Endothelial cell of umbilical vein (primary cell): ENCODE measurements at regions of chr17 and their contacts with region 1.

Region 1: DNA sequence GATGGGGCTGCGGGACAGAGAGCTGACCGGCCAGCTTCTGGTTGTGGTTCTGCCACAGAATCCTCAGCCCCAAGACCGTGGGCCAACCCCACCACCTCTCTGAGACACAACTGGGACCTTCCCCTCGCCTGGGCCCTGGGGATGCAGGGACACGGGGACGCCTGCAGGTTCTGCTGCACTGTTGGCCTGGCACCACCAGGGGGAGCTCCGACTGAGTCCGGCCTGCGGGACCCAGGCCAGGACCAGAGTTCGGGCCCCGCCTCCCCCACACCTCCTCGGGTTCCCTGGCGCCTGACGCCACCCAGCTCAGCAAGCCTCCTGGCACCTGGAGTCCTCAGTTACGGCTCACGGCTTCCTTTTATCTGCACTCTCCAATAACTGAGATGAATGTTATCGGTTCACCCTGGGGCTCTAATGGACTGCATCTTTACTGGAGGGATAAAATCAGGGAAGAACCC is 27.3 kb downstream of the TBC1D16 start:
- DNase-seq: peak; percentile 54
- H3K4me3 ChIP-seq: no peak overlapping the region
- H3K27ac ChIP-seq: no peak overlapping the region
- H3K4me1 ChIP-seq: no peaks in the 10 kb centered on the region
- H3K27me3 ChIP-seq: no peaks in the 10 kb centered on the region
- CTCF ChIP-seq: peak; percentile 97 to 99
- POLR2A ChIP-seq: no peak

Region 2: DNA sequence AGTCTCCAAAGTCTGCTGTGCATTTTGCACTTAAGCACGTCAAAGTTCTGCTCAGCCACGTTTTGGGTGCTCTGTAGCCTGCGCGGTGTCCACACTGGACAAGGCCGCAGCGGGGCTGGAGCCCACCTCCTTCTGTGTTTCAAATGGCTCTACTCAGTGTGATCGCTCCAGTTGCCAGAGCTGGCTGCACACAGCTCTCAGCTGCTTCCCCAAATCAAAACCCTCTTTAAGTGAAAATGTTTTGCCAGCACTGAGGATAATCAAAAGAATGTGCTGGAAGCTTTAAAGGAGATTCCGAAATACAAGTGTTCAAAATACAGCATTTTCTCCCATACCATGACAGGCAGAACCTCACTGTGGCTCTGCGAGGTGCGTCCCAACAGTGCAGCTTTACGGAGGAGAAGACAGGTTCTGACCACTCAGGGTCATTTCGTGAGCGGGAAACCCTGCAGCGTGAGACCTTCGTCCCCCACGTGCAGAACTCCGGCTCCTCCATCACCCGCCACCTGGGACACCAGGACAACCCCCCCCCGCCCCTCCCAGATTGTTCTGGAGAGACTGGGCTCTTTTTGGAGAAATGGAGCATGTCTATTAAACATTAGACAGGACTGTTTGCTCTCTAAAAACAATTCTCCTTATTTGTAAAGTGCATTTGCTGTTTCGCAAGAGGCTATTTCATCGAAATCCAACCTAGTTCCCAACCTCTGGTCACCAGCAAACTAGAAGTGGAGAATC is 10.7 kb after region 1 on chr17:
- CTCF ChIA-PET with region 1: interaction called, 21 read pairs
- POLR2A ChIA-PET with region 1: no interaction called
- dilution Hi-C with region 1: no loop called
- intact Hi-C with region 1: no loop called
- DNase-seq: no peak
- H3K4me3 ChIP-seq: no peak overlapping the region
- H3K27ac ChIP-seq: no peak overlapping the region
- H3K4me1 ChIP-seq: no peaks in the 10 kb centered on the region
- H3K27me3 ChIP-seq: no peaks in the 10 kb centered on the region
- CTCF ChIP-seq: no peak
- POLR2A ChIP-seq: no peak

Region 3: GRCh38 chr17:80035943-80036714 is 27.7 kb after region 1 on chr17 and contains the start of gene CCDC40:
- CTCF ChIA-PET with region 1: interaction called, 20 read pairs
- POLR2A ChIA-PET with region 1: no interaction called
- dilution Hi-C with region 1: no loop called
- intact Hi-C with region 1: loop called (anchors 1 kb)
- DNase-seq: peak; percentile 72
- H3K4me3 ChIP-seq: peak within 1 kb of the TSS; percentile 5 to 86 (median 76)
- H3K27ac ChIP-seq: peak within 1 kb of the TSS; percentile 71
- H3K4me1 ChIP-seq: peaks cover 7% of the 10 kb centered on the region
- H3K27me3 ChIP-seq: no peaks in the 10 kb centered on the region
- CTCF ChIP-seq: no peak
- POLR2A ChIP-seq: peak; percentile 63
- total RNA-seq, gene CCDC40: 4.1 and 5.5 TPM in 2 replicates

Region 4: DNA sequence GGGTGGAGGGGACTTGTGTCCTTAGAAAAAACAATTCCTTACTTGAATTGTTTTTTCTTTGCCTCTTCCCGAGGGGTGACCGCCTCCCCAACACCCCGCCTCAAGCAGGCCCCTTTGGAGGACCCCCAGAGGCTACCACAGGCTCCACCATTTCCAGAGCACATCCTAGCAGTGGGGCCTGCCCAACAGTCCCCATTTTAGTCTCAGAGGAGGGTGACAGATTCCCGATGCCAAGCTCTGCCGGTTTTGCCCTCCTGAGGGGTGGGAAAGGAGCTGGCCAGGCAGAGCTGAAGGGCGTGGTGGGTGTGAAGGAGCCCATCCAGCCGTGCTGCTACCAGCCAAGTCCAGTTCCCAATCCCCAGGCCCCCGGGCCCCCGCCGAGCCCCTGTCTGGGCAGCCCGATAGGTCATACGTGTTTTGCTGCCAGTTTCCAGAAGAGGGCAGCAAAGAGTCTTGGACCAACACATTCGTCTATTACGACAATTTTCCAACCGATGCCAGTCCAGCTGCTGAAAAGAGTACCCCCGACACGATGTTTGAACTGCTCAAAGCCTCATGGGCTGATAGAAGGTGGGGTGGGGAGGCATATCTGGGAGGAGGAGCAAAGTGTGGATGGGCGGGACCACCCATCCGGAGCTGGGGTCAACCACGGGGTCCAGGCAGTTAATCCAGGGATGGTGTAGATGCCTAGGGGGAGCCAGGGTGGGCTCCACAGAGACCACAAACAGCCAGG is 74.2 kb after region 1 on chr17:
- CTCF ChIA-PET with region 1: interaction called, 20 read pairs
- POLR2A ChIA-PET with region 1: no interaction called
- dilution Hi-C with region 1: no loop called
- intact Hi-C with region 1: loop called (anchors 1 kb)
- DNase-seq: peak; percentile 59
- H3K4me3 ChIP-seq: no peak overlapping the region
- H3K27ac ChIP-seq: no peak overlapping the region
- H3K4me1 ChIP-seq: no peaks in the 10 kb centered on the region
- H3K27me3 ChIP-seq: no peaks in the 10 kb centered on the region
- CTCF ChIP-seq: peak; percentile 50 to 84
- POLR2A ChIP-seq: no peak